Endothelial cell of umbilical vein (primary cell): ENCODE measurements at regions of chr2 and their contacts with region 1.

Region 1: DNA sequence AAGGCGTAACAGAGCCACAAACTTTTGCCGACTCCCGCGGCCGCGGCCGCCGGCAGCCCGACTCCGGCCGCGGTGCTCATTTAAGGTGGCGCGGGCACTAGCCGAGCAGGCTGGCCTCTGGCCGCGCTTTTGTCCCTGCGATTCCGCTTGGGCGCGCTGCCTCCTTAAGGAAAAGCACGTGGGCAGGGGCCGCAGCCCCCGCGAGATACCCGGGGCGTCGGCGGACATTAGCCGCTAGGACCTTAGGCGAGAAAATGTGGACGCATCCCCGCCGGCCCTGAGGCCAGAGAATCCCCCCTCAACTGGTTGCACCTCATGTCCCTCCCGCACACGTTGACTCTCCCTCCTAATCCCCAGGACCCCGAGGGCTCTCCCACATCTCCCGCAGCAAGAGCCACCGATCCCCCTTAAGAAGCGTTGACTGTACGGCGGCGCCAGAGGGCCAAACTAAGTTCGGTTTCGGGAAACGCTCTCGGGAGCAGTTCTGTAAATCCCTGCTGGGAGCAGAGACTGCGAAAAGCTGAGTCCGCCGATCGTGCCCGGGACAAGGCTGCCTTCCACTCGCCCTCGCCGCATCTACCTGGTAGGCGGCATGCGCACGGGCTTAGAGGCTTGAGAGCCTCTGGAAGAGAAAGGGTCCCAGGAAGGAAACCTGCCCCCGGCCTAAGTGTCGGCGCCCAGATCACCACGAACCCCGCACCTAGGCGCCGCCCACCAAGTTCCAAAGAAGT is 1.7 kb upstream of the SATB2 start:
- DNase-seq: peak; percentile 93
- H3K4me3 ChIP-seq: peak overlapping the region; percentile 28 to 84 (median 57)
- H3K27ac ChIP-seq: no peak overlapping the region
- H3K4me1 ChIP-seq: peaks cover 14% of the 10 kb centered on the region
- H3K27me3 ChIP-seq: peaks cover 58 to 82% of the 10 kb centered on the region in 2 experiments
- CTCF ChIP-seq: no peak
- POLR2A ChIP-seq: peak; percentile 14

Region 2: DNA sequence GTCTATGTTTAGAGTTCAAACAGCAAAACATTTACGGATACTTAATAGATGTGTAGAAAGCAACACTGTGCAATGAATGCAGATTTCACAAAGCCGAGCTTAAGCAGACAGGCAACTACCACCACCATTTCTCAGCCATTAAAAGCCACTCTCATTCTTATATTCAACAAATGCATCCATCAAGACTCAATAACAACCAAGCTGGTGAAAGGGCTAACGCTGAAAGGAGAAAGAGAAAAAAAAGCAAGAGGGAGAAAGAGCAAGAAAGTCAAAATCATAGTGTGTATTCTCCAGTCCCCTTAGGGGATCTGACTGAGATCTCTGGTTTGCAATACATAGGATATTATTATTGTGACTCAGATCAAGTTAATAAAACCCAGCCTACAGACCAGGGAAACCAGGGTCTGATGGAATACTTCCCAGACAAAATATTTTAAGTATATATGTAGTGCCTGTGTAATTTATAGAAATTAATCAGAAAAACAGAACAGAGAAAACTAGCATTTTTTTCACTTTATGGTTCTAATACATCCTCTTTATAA is 15.8 kb before region 1 on chr2:
- CTCF ChIA-PET with region 1: no interaction called
- POLR2A ChIA-PET with region 1: no interaction called
- dilution Hi-C with region 1: no loop called
- intact Hi-C with region 1: no loop called
- DNase-seq: no peak
- H3K4me3 ChIP-seq: no peak overlapping the region
- H3K27ac ChIP-seq: no peak overlapping the region
- H3K4me1 ChIP-seq: no peaks in the 10 kb centered on the region
- H3K27me3 ChIP-seq: peaks cover 2 to 19% of the 10 kb centered on the region in 2 experiments
- CTCF ChIP-seq: no peak
- POLR2A ChIP-seq: no peak

Region 3: GRCh38 chr2:199471443-199472057 is 12.1 kb after region 1 on chr2:
- CTCF ChIA-PET with region 1: interaction called, 9 read pairs
- POLR2A ChIA-PET with region 1: no interaction called
- dilution Hi-C with region 1: no loop called
- intact Hi-C with region 1: loop called (anchors 1 kb)
- DNase-seq: peak; percentile 36
- H3K4me3 ChIP-seq: no peak overlapping the region
- H3K27ac ChIP-seq: no peak overlapping the region
- H3K4me1 ChIP-seq: no peaks in the 10 kb centered on the region
- H3K27me3 ChIP-seq: peaks cover 60 to 68% of the 10 kb centered on the region in 2 experiments
- CTCF ChIP-seq: peak; percentile 72 to 94
- POLR2A ChIP-seq: no peak